Testis (tissue), 5 donors: ENCODE measurements at regions of chr13 and their contacts with region 1.

Region 1: GRCh38 chr13:75876360-75877050 is 240.4 kb downstream of the LMO7 start:
- DNase-seq: peak; percentile 79
- H3K4me3 ChIP-seq: no peak overlapping the region
- H3K27ac ChIP-seq: no peak overlapping the region
- H3K4me1 ChIP-seq: peaks cover 16% of the 10 kb centered on the region
- H3K27me3 ChIP-seq: no peaks in the 10 kb centered on the region
- CTCF ChIP-seq: peak; percentile 93 to 96 (median 95)
- POLR2A ChIP-seq: no peak

Region 2: DNA sequence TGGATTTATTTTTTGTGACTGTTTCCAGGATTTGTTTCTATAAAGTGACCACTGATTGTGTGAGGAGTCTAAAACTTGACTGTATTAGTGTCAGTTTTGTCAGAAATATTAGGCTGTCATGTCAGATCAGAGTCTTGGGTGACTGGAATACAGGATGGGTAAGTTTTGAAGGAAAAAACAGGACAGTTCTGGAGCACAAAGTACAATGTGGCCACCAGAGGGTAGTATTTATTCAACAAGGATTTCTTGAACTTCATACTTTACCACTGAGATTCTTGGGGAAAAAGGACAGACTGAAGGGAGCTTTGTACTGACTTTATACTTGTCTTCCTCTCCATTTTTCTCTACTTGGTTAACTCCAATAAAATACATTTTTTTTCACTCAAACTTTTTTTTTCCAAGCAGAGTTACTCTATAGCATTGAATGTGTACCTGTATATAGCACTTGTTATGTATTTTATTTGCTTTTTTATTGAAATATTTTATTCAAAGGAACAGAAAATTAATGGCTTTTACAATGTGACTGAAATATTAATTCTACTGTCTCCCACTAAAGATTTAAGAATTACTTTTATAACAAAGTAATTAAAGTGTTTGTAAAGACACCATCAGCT is 189.2 kb before region 1 on chr13:
- intact Hi-C with region 1: loop called (anchors 10 kb)
- DNase-seq: no peak
- H3K4me3 ChIP-seq: no peak overlapping the region
- H3K27ac ChIP-seq: no peak overlapping the region
- H3K4me1 ChIP-seq: no peaks in the 10 kb centered on the region
- H3K27me3 ChIP-seq: no peaks in the 10 kb centered on the region
- CTCF ChIP-seq: peak; percentile 59 to 71 (median 66)
- POLR2A ChIP-seq: no peak

Region 3: GRCh38 chr13:76473552-76474134 is 597.1 kb after region 1 on chr13:
- intact Hi-C with region 1: loop called (anchors 10 kb)
- DNase-seq: peak; percentile 92
- H3K4me3 ChIP-seq: no peak overlapping the region
- H3K27ac ChIP-seq: peak overlapping the region in 1 of 2 donors; percentile 32
- H3K4me1 ChIP-seq: peaks cover 13% of the 10 kb centered on the region
- H3K27me3 ChIP-seq: no peaks in the 10 kb centered on the region
- CTCF ChIP-seq: peak; percentile 92 to 98 (median 96)
- POLR2A ChIP-seq: no peak

Region 4: DNA sequence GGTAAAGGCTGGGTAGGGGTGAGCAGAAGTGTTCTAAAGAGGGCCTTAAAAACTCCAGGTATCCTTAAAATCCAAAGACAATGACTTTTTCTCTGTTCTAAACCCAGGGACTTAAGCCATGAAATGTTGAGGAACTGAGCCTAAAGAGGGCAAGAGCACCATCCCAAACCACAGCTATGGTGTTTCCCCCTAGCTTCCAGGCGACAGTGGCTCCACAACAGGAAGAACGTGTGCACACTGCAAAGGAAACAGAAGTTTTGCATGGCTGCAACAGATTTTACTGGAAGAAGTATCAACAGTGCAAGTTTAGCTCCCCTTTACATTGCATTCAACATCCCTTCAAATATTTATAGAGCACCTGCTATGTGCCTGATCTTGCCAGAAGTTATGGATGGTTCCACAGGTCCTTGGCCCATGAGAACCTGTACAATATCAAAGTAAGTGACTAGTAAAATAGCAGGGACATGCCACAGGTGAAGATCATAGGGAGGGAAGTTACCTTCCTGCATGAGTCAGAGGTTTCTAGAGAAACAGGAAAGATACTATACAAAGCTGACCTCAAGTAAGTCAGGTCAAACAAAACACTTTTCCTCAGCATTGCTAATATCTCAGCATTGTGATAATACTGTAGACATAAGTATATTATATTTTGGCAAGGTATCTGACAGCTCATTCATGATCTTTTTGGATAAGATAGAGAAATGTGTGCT is 1018.1 kb after region 1 on chr13:
- intact Hi-C with region 1: loop called (anchors 10 kb)
- DNase-seq: no peak
- H3K4me3 ChIP-seq: no peak overlapping the region
- H3K27ac ChIP-seq: no peak overlapping the region
- H3K4me1 ChIP-seq: no peaks in the 10 kb centered on the region
- H3K27me3 ChIP-seq: no peaks in the 10 kb centered on the region
- CTCF ChIP-seq: no peak
- POLR2A ChIP-seq: no peak